ENCODE measurements at regions of chr19 and their contacts with region 1.

Region 1: DNA sequence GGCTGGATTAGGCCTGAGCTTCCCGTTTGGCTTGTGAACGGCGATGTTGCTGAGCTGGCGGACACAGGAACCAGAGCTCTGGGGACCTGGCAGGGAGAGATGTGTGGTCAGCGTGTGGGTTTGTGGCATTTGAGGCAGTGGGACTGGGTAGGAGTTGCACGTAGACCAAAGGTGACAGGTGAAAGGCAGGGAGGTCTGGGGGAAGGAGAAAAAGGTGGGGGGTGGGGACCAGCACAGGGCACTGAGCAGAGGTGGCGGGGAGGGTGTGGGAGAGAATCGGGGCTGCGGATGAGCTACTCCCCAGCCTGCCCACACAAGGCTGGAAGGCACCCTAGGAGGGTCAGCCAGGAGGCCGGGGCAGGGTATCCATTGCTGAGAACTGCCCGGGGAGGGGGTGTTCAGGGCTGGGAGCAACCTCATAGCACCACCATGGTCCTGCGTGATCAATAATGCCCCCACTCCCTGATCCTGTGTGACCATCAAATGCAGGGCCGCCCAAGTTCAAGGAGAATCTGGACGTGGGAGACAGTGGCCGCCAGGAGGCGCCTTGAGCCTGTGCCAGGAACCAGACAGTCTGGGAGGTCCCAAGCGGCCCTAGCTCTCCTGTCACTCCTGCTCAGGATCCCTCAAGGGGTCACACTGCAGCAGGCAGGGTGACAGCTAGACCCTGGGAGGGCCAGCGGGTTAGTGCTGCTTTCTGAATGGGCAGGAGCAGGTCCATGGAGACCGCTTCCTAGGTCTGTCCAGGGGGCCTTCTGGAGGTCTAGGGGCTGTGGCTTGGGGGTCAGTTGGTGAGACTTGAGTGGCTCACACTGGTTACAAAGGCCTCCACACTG is 12.8 kb upstream of the SELENOW start:
- DNase-seq: no peak
- ATAC-seq: peak; percentile 90
- H3K4me3 ChIP-seq: no peak overlapping the region
- H3K27ac ChIP-seq: no peak overlapping the region
- H3K4me1 ChIP-seq: no peaks in the 10 kb centered on the region
- H3K27me3 ChIP-seq: no peaks in the 10 kb centered on the region
- CTCF ChIP-seq: peak; percentile 86

Region 2: DNA sequence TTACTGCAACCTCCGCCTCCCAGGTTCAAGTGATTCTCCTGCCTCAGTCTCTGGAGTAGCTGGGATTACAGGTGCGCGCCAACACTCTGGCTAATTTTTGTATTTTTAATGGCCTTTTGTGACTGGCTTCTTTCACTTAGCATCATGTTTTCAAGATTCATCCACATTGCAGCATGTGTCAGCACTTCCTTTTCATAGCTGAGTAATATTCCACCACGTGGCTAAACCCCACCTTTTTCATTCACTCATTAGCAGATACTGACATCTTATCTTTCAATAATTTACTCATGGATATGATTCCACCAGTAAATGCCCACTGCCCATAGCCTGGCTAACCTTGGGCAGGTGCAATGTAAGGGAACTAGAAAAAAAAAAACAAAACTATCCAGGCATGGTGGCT is 449.2 kb before region 1 on chr19:
- CTCF ChIA-PET with region 1: no interaction called
- POLR2A ChIA-PET with region 1: interaction called, 14 read pairs
- in situ Hi-C with region 1: no loop called
- intact Hi-C with region 1: no loop called
- DNase-seq: no peak
- ATAC-seq: no peak
- H3K4me3 ChIP-seq: no peak overlapping the region
- H3K27ac ChIP-seq: no peak overlapping the region
- H3K4me1 ChIP-seq: 0 out of 2 replicates have a peak, but pooled peaks cover 3% of the 10 kb centered on the region
- H3K27me3 ChIP-seq: no peaks in the 10 kb centered on the region
- CTCF ChIP-seq: no peak

Region 3: GRCh38 chr19:47479701-47480461 is 285.9 kb before region 1 on chr19:
- CTCF ChIA-PET with region 1: no interaction called
- POLR2A ChIA-PET with region 1: no interaction called
- in situ Hi-C with region 1: no loop called
- intact Hi-C with region 1: no loop called
- DNase-seq: no peak
- ATAC-seq: no peak
- H3K4me3 ChIP-seq: no peak overlapping the region
- H3K27ac ChIP-seq: no peak overlapping the region
- H3K4me1 ChIP-seq: peaks cover 1% of the 10 kb centered on the region; the same call in 1 of the 2 replicates
- H3K27me3 ChIP-seq: no peaks in the 10 kb centered on the region
- CTCF ChIP-seq: no peak

Region 4: DNA sequence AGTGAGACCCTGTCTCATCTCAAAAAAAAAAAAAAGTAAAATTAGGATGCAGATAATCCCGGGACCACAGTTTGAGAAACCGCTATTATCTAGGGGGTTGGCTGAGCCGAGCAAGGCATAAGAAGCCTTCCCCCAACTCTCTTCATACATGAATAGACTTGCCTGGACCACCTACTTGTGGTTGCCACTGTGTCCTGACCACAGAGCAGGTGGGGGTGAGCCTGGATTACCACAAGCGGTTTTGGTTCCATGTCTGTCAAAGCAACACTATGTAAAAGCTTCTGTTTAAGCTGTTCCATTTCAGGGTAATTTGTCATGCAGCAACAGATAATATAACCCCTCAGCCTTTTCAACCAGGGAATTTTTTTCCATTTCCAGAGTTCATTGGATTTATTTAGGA is 247.6 kb before region 1 on chr19:
- CTCF ChIA-PET with region 1: no interaction called
- POLR2A ChIA-PET with region 1: no interaction called
- in situ Hi-C with region 1: no loop called
- intact Hi-C with region 1: no loop called
- DNase-seq: no peak
- ATAC-seq: no peak
- H3K4me3 ChIP-seq: no peak overlapping the region
- H3K27ac ChIP-seq: no peak overlapping the region
- H3K4me1 ChIP-seq: peaks cover 5% of the 10 kb centered on the region; the same call in 1 of the 2 replicates
- H3K27me3 ChIP-seq: no peaks in the 10 kb centered on the region
- CTCF ChIP-seq: no peak

Region 5: GRCh38 chr19:47790398-47790814 is 24.7 kb after region 1 on chr19:
- CTCF ChIA-PET with region 1: interaction called, 4 read pairs
- POLR2A ChIA-PET with region 1: no interaction called
- in situ Hi-C with region 1: no loop called
- intact Hi-C with region 1: loop called (anchors 2 kb)
- DNase-seq: peak; percentile 32
- ATAC-seq: peak; percentile 90
- H3K4me3 ChIP-seq: no peak overlapping the region
- H3K27ac ChIP-seq: no peak overlapping the region
- H3K4me1 ChIP-seq: no peaks in the 10 kb centered on the region
- H3K27me3 ChIP-seq: no peaks in the 10 kb centered on the region
- CTCF ChIP-seq: peak; percentile 90

Measured in Panc1 (cell line).